ENCODE measurements at regions of chr6 and their contacts with region 1.

Region 1: GRCh38 chr6:31901953-31902643 is at the start of gene ZBTB12:
- DNase-seq: peak; percentile 84 to 98 (median 95)

Region 2: GRCh38 chr6:31568537-31568961 is 333.5 kb before region 1 on chr6:
- intact Hi-C with region 1: no loop called
- DNase-seq: no peak

Region 3: GRCh38 chr6:31862344-31863227 is 39.5 kb before region 1 on chr6 and contains the start of gene NEU1:
- intact Hi-C with region 1: loop called (anchors 5 kb)
- DNase-seq: peak; percentile 100

Region 4: GRCh38 chr6:31952140-31952805 is 50.2 kb after region 1 on chr6:
- intact Hi-C with region 1: loop called (anchors 5 kb)
- DNase-seq: peak in 40 of 42 donors; percentile 29 to 84 (median 60)

Measured in head of caudate nucleus (tissue), 42 donors.